Breast epithelium (tissue), 4 donors: ENCODE measurements at regions of chr1 and their contacts with region 1.

Region 1: GRCh38 chr1:204213668-204214662 is at the start of gene GOLT1A:
- DNase-seq: peak; percentile 64 to 79
- H3K4me3 ChIP-seq: peak within 1 kb of the TSS in 2 of 3 donors; percentile 47 to 60
- H3K27ac ChIP-seq: peak within 1 kb of the TSS; percentile 27 to 56
- H3K4me1 ChIP-seq: no peaks in the 10 kb centered on the region
- H3K27me3 ChIP-seq: no peaks in the 10 kb centered on the region
- CTCF ChIP-seq: peak; percentile 53 to 86 (median 80)
- POLR2A ChIP-seq: no peak
- total RNA-seq, gene GOLT1A: 3.4 to 4.6 TPM in 2 of 3 donors, not detected in the other

Region 2: DNA sequence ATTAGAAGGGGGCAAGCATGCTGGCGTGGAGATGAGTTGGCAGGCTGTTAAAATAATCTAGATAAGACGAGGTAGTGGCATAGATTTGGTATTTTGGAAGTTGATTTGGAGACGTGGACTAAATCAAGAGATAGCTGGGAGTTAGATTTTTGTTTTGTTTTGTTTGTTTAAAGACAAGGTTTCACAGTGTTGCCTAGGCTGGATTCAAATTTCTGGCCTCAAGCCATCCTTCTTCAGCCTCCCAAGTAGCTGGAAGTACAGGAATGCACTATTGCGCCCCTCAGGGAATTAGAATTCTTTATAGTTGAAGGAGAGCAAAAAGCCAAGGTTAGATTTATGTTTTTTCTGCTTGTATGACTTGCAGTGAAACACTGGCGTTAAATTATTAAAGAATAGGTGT is 374.9 kb before region 1 on chr1:
- intact Hi-C with region 1: no loop called
- DNase-seq: no peak
- H3K4me3 ChIP-seq: no peak overlapping the region
- H3K27ac ChIP-seq: no peak overlapping the region
- H3K4me1 ChIP-seq: no peaks in the 10 kb centered on the region
- H3K27me3 ChIP-seq: no peaks in the 10 kb centered on the region
- CTCF ChIP-seq: no peak
- POLR2A ChIP-seq: no peak

Region 3: DNA sequence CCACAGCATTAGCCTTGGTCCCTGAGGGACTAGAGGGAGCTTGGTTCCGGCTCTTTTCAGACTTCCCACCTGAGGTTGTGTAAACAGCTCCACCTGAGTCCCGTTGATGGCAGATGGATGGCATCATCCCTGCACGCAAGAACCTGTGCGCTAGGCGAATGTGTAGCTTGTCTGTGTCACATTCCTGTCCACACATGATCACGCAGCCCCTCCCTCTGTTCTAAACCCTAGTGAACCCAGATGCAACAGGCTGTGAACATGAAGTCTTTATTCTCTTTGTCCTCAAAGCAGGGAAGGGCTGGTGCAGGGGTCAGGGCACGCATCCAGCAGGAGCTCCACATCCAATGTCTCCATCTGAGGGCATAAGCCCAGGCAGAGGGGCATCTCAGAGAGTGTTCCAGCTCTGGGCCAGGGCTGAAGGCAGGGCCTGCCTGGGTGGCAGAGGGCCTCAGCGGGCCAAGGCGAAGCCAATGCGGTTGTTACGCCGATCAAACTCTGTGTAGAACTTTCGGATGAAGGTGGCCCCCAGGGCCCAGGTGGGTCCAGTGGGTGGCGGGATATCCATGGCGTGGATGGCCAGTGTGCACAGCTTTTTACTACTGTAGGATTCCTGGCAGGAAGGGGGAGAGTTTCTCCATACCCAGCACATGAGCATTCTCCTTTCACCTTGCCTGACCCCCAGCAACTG is 59.3 kb before region 1 on chr1:
- intact Hi-C with region 1: loop called (anchors 5 kb)
- DNase-seq: no peak
- H3K4me3 ChIP-seq: no peak overlapping the region
- H3K27ac ChIP-seq: no peak overlapping the region
- H3K4me1 ChIP-seq: peaks cover 5 to 10% of the 10 kb centered on the region in 2 donors
- H3K27me3 ChIP-seq: no peaks in the 10 kb centered on the region
- CTCF ChIP-seq: no peak
- POLR2A ChIP-seq: no peak

Region 4: DNA sequence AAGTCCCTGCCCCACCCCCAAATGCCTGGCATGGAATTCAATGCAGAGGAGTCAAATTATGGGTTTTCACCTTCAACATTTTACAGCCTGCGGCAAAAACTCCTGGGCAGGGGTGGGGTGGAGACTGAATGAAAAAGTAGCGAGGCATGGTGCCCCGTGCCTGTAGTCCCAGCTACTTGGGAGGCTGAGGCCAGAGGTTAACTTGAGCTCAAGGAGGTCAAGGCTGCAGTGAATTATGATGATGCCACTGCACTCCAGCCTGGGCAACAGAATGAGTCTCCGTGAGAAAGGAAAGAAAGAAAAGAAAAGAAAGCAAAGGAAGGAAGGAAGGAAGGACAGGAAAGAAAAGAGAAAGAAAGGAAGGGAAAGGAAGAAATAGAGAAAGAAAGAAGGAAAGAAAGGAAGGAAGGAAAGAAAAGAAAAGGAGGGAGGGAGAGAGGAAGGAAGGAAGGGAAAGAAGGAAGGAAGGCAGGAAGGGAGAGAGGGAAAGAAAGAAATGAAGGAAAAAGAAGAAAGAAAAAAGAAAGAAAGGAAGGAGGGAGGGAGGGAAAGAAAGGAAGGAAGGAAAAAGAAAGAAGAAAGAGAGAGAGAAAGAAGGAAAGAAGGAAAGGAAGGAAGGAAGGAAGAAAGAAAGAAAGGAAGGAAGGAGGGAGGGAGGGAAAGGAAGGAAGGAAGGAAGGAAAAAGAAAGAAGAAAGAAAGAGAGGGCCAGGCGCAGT is 1196.8 kb after region 1 on chr1:
- intact Hi-C with region 1: no loop called
- DNase-seq: no peak
- H3K4me3 ChIP-seq: no peak overlapping the region
- H3K27ac ChIP-seq: no peak overlapping the region
- H3K4me1 ChIP-seq: no peaks in the 10 kb centered on the region
- H3K27me3 ChIP-seq: no peaks in the 10 kb centered on the region
- CTCF ChIP-seq: no peak
- POLR2A ChIP-seq: no peak